MCF 10A (cell line): ENCODE measurements at regions of chr12 and their contacts with region 1.

Region 1: DNA sequence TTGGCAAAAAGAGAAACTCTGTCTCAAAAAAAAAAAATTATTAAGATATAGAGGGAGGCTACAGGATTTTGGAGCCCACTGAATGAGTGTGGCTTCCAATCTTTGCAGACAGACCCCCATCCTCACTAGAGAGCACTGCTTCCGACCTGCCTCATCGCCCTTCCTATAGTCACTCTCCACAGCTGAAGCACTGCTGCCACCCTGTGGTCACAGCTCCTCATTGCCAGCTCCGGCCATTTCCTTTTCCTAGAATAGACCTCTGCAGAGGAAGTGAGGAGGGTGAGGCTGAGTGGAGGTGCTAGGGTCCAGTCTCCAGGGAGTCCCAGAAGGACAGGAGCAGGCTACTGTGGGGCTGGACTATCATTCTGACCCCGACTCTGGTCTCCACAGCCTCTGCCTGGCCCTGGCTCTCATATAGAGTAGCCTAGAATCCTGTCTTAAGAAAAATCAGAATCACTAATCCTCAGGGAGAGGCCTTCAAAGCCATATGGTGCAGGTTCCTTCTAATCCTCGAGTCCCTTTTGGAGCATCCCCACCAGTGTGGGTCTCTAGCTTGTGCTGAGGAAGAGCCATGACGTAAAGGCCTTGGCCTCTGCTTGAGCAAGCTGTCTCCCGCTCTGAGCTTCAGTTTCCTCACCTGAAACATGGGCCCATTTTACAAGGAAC is 1.4 kb upstream of the NPFF start:
- DNase-seq: peak; percentile 85
- H3K4me3 Mint-ChIP-seq: no peak overlapping the region
- H3K27ac Mint-ChIP-seq: no peak overlapping the region
- H3K4me1 Mint-ChIP-seq: peaks cover 5% of the 10 kb centered on the region
- H3K27me3 Mint-ChIP-seq: no peaks in the 10 kb centered on the region
- CTCF ChIP-seq: peak; percentile 88

Region 2: GRCh38 chr12:53313996-53314395 is 194.7 kb before region 1 on chr12:
- CTCF ChIA-PET with region 1: no interaction called
- POLR2A ChIA-PET with region 1: no interaction called
- intact Hi-C with region 1: no loop called
- DNase-seq: no peak
- H3K4me3 Mint-ChIP-seq: no peak overlapping the region
- H3K27ac Mint-ChIP-seq: no peak overlapping the region
- H3K4me1 Mint-ChIP-seq: no peaks in the 10 kb centered on the region
- H3K27me3 Mint-ChIP-seq: no peaks in the 10 kb centered on the region
- CTCF ChIP-seq: no peak

Region 3: GRCh38 chr12:53441040-53441833 is 67.4 kb before region 1 on chr12 and contains the start of gene PRR13:
- CTCF ChIA-PET with region 1: interaction called, 3 read pairs
- POLR2A ChIA-PET with region 1: interaction called, 3 read pairs
- intact Hi-C with region 1: loop called (anchors 2 kb)
- DNase-seq: peak; percentile 99
- H3K4me3 Mint-ChIP-seq: peak within 1 kb of the TSS; percentile 95
- H3K27ac Mint-ChIP-seq: peak within 1 kb of the TSS; percentile 94
- H3K4me1 Mint-ChIP-seq: peaks cover 18% of the 10 kb centered on the region
- H3K27me3 Mint-ChIP-seq: no peaks in the 10 kb centered on the region
- CTCF ChIP-seq: no peak
- total RNA-seq, gene PRR13: 147 and 173 TPM in 2 replicates

Region 4: GRCh38 chr12:53481957-53482586 is 26.6 kb before region 1 on chr12:
- CTCF ChIA-PET with region 1: interaction called, 23 read pairs
- POLR2A ChIA-PET with region 1: interaction called, 7 read pairs
- intact Hi-C with region 1: no loop called
- DNase-seq: no peak
- H3K4me3 Mint-ChIP-seq: no peak overlapping the region
- H3K27ac Mint-ChIP-seq: no peak overlapping the region
- H3K4me1 Mint-ChIP-seq: peaks cover 6% of the 10 kb centered on the region
- H3K27me3 Mint-ChIP-seq: no peaks in the 10 kb centered on the region
- CTCF ChIP-seq: no peak

Region 5: DNA sequence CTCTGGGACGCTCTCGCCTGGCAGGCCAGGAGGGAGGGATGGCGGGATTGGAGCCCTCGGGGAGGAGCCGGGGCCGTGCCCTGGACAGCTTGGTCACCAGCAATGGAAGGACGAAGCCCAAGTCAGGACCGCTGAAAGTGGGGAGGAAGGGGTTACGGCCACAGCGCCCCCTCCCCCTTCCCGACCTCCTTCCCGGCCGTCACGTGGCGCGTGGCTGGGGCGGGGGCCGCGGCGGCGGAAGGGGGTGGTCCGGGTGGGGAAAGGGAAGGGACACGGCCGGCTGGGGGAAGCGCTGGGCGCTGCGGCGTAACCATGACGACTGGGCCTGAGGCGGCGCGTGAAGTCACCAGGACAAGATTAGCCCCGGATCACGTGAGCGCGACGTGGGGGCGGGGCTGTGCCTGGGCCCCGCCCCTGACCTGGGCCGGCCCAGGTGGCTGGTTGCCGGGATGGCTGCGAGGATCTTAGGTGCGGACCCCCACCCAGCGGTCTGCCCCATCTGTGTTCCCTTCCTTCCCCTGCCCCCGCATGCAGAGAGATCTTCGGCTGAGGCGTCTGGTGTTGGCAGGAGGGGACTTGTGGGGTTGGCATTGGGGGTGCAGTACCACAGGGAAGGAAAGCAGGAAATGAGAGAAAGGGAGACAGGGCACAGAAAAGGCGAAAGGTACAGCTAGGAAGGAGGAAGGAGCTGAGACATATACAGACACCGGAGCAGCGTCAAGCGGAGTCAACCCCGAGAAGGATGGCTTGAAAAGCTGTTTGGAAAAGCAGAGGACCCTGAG is 15.6 kb before region 1 on chr12:
- CTCF ChIA-PET with region 1: interaction called, 10 read pairs
- POLR2A ChIA-PET with region 1: interaction called, 3 read pairs
- intact Hi-C with region 1: no loop called
- DNase-seq: peak; percentile 84
- H3K4me3 Mint-ChIP-seq: peak overlapping the region; percentile 76
- H3K27ac Mint-ChIP-seq: peak overlapping the region; percentile 32
- H3K4me1 Mint-ChIP-seq: peaks cover 29% of the 10 kb centered on the region
- H3K27me3 Mint-ChIP-seq: no peaks in the 10 kb centered on the region
- CTCF ChIP-seq: no peak

Region 6: DNA sequence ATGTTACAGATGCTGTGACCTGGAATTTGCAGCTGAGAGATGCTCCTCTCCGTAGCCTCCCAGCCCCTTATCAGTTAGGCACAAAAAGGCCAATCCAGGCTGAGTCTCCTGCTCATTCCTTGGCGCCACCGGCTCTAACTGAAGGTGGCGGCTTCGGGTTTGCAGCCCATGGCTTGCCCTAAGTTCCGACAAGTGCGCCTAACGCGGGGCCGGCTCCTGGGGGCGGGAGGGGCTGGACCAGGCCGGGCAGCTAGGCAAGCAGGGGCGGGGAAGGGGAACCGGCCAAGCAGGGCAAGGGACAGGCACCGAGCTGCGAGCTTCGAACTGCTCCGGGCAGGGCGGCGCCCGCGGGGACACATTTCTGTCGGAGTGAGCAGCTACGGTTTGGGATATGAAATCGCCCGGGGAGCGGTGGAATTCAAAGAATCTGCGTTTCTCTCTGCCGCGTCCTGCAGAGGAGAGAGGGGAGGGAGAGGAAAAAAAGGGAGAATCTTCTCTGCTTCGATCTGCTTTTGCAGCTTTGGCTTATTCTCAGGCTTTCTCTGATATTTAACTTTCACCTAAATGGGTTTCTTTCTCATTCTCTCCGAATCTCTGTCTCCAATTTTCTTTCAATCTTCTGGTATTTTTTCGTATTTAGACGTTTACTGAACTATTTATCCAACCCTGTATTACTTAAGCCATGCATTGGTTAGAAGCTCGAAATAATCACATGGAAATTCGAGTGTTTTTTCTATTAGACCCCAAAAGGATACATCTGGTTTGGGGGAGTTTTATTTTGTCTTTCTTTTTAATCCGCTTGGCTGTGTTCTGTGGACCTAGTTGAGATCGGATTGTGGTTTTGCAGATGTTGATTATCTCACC is 444.4 kb after region 1 on chr12:
- CTCF ChIA-PET with region 1: no interaction called
- POLR2A ChIA-PET with region 1: no interaction called
- intact Hi-C with region 1: no loop called
- DNase-seq: peak; percentile 12
- H3K4me3 Mint-ChIP-seq: peak overlapping the region; percentile 49
- H3K27ac Mint-ChIP-seq: no peak overlapping the region
- H3K4me1 Mint-ChIP-seq: no peaks in the 10 kb centered on the region
- H3K27me3 Mint-ChIP-seq: no peaks in the 10 kb centered on the region
- CTCF ChIP-seq: no peak